Tibial artery (tissue), 4 donors: ENCODE measurements at regions of chr11 and their contacts with region 1.

Region 1: DNA sequence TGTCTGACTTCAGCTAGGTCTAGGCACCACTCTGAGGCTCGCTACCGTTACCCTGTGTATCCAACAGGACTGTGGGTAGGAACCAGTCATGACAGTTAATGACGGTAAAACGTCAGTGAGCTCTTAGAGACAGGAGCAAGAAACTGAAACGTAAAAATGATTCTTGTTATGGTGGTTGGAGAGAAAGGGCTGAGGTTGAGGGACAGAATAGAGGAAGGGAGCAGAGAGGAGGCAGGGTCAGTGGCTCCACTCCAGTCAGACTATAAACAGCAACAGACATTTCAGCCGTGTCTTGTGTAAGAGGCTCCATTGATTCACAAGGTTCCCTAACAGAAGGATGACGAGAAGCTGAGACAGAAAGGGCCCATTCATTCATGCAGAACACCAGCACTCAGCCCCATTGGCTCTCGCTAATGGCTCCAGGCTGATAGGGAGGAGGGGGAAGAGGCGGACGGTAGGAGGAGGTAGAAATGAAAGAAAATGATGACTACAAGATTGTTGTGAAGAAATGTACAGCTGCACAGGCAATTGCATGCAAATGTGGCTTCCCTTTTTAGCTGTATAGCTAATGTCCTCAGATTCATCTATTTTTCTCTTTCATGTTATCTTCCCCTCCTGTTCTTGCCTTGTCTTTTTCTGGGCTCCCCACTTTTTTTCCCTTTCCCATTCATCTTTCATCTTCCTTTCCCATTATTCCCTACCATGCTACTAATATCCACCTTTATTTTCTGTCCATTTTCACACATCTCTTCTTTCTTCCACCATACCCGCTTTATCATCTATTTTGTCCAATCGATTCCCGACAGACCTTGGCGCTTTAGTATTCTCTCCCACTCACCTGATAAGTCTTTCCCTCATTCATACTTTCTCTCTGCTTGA is 34.3 kb downstream of the ETS1 start:
- DNase-seq: no peak
- H3K4me3 ChIP-seq: no peak overlapping the region
- H3K27ac ChIP-seq: no peak overlapping the region
- H3K4me1 ChIP-seq: peaks cover 0 to 24% (median 14%) of the 10 kb centered on the region in 4 donors
- H3K27me3 ChIP-seq: no peaks in the 10 kb centered on the region
- CTCF ChIP-seq: no peak

Region 2: GRCh38 chr11:128238521-128239265 is 314.3 kb before region 1 on chr11:
- intact Hi-C with region 1: no loop called
- DNase-seq: no peak
- H3K4me3 ChIP-seq: no peak overlapping the region
- H3K27ac ChIP-seq: no peak overlapping the region
- H3K4me1 ChIP-seq: peaks cover 0 to 10% (median 0%) of the 10 kb centered on the region in 4 donors
- H3K27me3 ChIP-seq: no peaks in the 10 kb centered on the region
- CTCF ChIP-seq: no peak

Region 3: GRCh38 chr11:128290106-128290840 is 262.7 kb before region 1 on chr11:
- intact Hi-C with region 1: loop called (anchors 5 kb)
- DNase-seq: peak; percentile 47 to 67
- H3K4me3 ChIP-seq: no peak overlapping the region
- H3K27ac ChIP-seq: peak overlapping the region; percentile 14 to 15
- H3K4me1 ChIP-seq: peaks cover 0 to 34% (median 17%) of the 10 kb centered on the region in 4 donors
- H3K27me3 ChIP-seq: no peaks in the 10 kb centered on the region
- CTCF ChIP-seq: peak; percentile 84 to 85

Region 4: DNA sequence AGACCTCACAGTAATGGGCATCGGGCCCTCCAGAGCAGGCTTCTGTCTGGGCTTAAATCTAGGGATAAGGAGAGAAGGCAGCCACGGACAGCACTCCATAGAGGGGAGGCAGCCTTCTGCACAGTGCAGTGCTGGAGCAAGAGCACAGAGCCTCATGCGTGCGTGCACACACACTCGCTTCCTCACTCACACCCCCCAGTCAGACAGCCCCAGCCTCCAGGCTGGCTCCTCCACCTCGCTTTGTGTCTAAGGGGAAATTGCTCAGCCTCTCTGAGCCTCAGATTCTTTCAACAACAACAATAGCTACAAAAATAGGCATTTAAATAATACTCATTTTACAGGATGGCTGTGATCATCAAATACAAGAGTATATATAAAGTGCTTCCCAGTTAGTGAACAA is 61.0 kb after region 1 on chr11:
- intact Hi-C with region 1: no loop called
- DNase-seq: no peak
- H3K4me3 ChIP-seq: no peak overlapping the region
- H3K27ac ChIP-seq: no peak overlapping the region
- H3K4me1 ChIP-seq: no peaks in the 10 kb centered on the region
- H3K27me3 ChIP-seq: peaks cover 0 to 10% of the 10 kb centered on the region in 2 donors
- CTCF ChIP-seq: no peak

Region 5: DNA sequence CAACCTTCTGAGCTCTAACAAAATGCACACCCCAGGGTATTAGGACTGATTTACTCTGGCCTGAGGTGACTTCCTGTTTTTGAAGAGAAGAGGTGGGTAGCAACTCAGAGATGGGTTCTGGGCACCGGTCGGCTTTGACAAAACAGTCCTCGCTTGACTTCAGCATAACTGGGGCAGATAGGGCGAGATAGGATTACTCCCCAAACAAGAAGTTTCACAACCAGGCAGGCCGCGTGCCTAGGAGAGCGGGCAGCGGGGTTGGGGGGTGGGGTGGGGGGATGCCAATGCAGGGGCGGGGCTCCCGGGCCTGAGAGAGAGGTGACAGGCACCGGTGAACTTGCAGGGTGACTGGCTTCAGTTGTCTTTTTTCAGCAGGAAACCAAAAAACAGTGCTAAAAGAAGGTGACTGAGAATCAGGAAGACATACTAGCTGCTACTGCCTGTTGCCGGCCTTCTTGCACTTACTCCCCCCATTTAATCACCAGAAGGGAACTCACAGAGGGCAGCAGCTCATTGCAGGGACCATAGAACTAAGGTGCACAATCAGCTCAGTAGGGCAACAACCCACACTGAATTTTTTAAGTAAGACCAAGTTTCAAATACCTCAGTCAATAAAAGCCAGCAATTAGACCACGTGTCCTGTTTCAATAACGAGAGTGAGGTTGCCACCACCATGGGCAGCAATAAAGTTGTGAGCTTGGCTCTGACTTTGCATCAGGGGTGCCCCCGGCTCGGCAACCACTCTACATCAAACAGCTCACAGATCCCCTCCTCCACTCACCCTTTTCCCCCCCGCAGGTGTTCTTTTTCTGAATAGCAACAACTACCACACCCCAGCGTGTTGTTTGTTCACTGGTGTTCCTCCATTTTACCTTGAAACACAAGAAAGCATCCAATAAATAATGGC is 71.5 kb after region 1 on chr11:
- intact Hi-C with region 1: loop called (anchors 10 kb)
- DNase-seq: no peak
- H3K4me3 ChIP-seq: no peak overlapping the region
- H3K27ac ChIP-seq: no peak overlapping the region
- H3K4me1 ChIP-seq: peaks cover 0 to under 1% (median 0%) of the 10 kb centered on the region in 4 donors
- H3K27me3 ChIP-seq: no peaks in the 10 kb centered on the region
- CTCF ChIP-seq: no peak